Esophagus muscularis mucosa (tissue), 4 donors: ENCODE measurements at regions of chrX and their contacts with region 1.

Region 1: DNA sequence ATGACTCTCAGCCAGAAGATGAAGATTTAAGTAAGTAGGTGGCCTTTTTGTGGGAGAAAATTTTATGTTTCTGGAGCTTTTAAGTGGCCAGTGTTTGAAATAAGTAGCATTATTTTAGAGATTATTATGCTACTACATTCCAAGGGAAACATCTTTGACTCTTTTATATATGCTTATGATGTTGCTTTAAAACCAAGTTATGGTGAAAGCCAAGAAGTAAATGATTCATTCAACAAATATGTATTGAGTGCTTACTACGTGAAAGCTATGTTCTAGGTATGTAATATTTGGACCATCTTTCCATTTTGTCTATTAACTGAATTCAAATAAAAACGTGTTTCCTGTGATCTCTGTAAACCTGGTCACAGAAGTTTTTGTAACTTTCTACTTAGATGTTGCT is 58.3 kb downstream of the ZFX start:
- DNase-seq: no peak
- H3K4me3 ChIP-seq: no peak overlapping the region
- H3K27ac ChIP-seq: no peak overlapping the region
- H3K4me1 ChIP-seq: peaks cover 3 to 20% (median 11%) of the 10 kb centered on the region in 4 donors
- H3K27me3 ChIP-seq: no peaks in the 10 kb centered on the region
- CTCF ChIP-seq: no peak
- EP300 ChIP-seq: no peak
- POLR2A ChIP-seq: no peak

Region 2: DNA sequence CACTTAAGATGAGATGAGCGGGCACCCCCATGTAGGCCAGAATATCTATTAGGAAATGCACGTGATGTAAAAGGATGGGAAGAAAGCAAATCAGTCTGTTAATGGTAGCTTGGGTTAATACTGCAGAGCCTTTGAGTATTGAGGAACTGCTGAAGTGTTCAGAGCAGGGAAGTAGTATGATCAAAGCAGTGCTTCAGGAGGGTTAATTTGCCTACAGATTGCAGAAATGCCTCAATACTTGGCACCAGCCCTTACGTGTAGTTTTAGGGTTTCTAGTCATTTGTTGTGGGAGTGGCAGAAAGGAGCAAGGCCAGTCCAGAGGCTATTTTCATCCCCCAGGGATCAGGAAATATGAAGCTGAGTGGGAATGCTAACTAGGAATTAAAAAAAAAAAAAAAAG is 38.6 kb before region 1 on chrX:
- intact Hi-C with region 1: loop called (anchors 5 kb)
- DNase-seq: no peak
- H3K4me3 ChIP-seq: no peak overlapping the region
- H3K27ac ChIP-seq: no peak overlapping the region
- H3K4me1 ChIP-seq: peaks cover 44 to 81% (median 67%) of the 10 kb centered on the region in 4 donors
- H3K27me3 ChIP-seq: no peaks in the 10 kb centered on the region
- CTCF ChIP-seq: no peak
- EP300 ChIP-seq: no peak
- POLR2A ChIP-seq: no peak